Transverse colon (tissue), 4 donors: ENCODE measurements at regions of chr13 and their contacts with region 1.

Region 1: GRCh38 chr13:82364525-82364924 is 1517.7 kb downstream of the SLITRK1 start:
- DNase-seq: no peak
- H3K4me3 ChIP-seq: no peak overlapping the region
- H3K27ac ChIP-seq: no peak overlapping the region
- H3K4me1 ChIP-seq: no peaks in the 10 kb centered on the region
- H3K27me3 ChIP-seq: no peaks in the 10 kb centered on the region
- CTCF ChIP-seq: no peak
- EP300 ChIP-seq: no peak
- POLR2A ChIP-seq: no peak

Region 2: GRCh38 chr13:81990647-81991046 is 373.9 kb before region 1 on chr13:
- in situ Hi-C with region 1: no loop called
- intact Hi-C with region 1: loop called (anchors 10 kb)
- DNase-seq: no peak
- H3K4me3 ChIP-seq: no peak overlapping the region
- H3K27ac ChIP-seq: no peak overlapping the region
- H3K4me1 ChIP-seq: no peaks in the 10 kb centered on the region
- H3K27me3 ChIP-seq: no peaks in the 10 kb centered on the region
- CTCF ChIP-seq: no peak
- EP300 ChIP-seq: no peak
- POLR2A ChIP-seq: no peak

Region 3: DNA sequence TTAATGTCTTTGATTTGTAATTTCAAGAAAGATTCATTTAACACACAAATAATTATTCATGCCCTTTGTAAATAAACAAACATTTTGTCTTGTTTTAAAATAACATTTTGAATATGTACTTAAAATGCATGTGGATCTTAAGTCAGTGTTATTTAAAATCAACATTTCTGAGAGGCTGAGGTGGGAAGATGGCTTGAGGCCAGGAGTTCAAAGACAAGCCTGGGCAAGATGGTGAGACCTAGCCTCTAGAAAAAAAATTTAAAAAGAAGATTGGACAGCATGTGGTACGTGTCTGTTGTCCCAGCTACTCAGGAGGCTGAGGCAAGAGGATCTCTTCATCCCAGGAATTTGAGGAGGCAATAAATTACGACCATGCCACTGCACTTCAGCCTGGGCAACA is 249.6 kb after region 1 on chr13:
- in situ Hi-C with region 1: no loop called
- intact Hi-C with region 1: no loop called
- DNase-seq: no peak
- H3K4me3 ChIP-seq: no peak overlapping the region
- H3K27ac ChIP-seq: no peak overlapping the region
- H3K4me1 ChIP-seq: no peaks in the 10 kb centered on the region
- H3K27me3 ChIP-seq: no peaks in the 10 kb centered on the region
- CTCF ChIP-seq: no peak
- EP300 ChIP-seq: no peak
- POLR2A ChIP-seq: no peak